Tibial artery (tissue), 4 donors: ENCODE measurements at regions of chr22 and their contacts with region 1.

Region 1: GRCh38 chr22:49305214-49305909 is 522.3 kb downstream of the BRD1 start:
- DNase-seq: peak; percentile 19 to 73
- H3K4me3 ChIP-seq: no peak overlapping the region
- H3K27ac ChIP-seq: no peak overlapping the region
- H3K4me1 ChIP-seq: peaks cover 0 to 7% (median 4%) of the 10 kb centered on the region in 4 donors
- H3K27me3 ChIP-seq: peaks cover 0 to 43% of the 10 kb centered on the region in 2 donors
- CTCF ChIP-seq: peak; percentile 84 to 85

Region 2: DNA sequence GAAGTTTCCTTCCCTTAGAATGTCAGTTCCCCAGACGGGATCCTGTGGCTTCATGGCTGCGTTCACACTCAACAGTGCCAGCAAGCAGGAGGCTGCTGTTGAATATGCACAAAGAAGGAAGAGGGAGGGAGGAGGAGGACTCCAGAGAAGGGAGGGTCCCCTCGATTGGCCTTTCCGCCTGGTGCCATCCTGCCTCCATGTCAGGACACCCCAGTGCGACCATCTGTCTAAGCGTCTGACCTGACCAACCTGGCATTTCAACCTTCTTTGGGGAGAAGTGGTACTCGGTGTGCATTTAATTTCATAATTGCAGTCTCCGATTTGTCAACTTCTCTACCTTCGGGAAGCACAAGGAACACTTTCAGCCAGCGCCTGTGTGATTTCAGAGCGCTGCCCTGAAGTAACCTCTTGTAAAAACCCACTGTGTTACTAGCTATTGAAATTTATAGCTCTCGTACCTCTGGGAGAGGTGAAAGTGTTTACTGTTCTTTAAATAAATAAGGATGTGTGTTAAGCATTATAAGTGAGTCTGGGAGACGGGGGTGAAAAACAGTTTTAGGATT is 1051.0 kb before region 1 on chr22:
- intact Hi-C with region 1: loop called (anchors 10 kb)
- DNase-seq: no peak
- H3K4me3 ChIP-seq: no peak overlapping the region
- H3K27ac ChIP-seq: no peak overlapping the region
- H3K4me1 ChIP-seq: no peaks in the 10 kb centered on the region
- H3K27me3 ChIP-seq: peaks cover 0 to 20% of the 10 kb centered on the region in 2 donors
- CTCF ChIP-seq: no peak

Region 3: GRCh38 chr22:49368976-49369725 is 63.8 kb after region 1 on chr22:
- intact Hi-C with region 1: loop called (anchors 10 kb)
- DNase-seq: peak in 1 of 2 donors; percentile 54
- H3K4me3 ChIP-seq: peak overlapping the region in 1 of 2 donors; percentile 20
- H3K27ac ChIP-seq: no peak overlapping the region
- H3K4me1 ChIP-seq: no peaks in the 10 kb centered on the region
- H3K27me3 ChIP-seq: peaks cover 0 to 25% of the 10 kb centered on the region in 2 donors
- CTCF ChIP-seq: no peak